Activated naive CD4-positive, alpha-beta T cell treated with anti-CD3 and anti-CD28 coated beads for 36 hours (primary cell): ENCODE measurements at regions of chr2 and their contacts with region 1.

Region 1: DNA sequence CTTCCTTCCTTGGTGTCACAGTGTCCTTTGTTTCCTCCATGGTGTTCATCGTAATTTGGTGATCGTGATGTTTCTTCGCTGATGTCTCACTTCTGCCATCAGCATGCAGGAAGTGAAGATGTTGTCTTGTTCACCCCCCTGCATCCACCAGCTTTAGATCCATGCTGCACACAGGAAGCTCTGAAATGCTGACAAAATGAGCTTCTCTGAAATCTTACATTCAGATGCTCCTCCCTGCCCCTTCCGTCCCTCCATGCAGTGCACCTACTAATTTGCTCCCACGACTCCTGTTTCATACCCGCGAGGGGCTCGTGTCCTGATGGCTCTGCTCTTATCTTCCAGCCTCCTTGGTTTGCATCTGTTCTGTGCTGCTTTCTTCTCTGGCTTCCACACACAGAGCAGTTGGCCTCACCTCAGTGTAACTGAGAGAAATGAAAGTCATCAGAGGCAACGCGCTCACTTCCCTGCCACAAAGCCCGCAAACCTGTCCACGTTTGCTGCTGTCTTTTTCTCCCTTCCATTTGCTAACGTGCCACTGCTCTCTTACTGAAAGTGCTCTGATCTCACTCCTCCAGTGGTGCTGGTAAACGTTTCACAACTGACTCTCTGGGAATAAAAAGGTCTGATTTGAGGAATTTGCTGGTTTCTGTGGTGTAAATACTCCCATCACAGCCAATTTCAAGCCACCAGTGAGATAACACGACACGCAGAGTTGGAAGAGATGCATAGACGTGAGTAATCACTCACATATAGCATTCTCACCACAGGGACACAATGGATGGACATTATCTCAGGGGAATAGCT is 41.0 kb upstream of the MGAT4A start:
- DNase-seq: peak; percentile 80
- H3K4me3 Mint-ChIP-seq: peak overlapping the region; percentile 92
- H3K27ac Mint-ChIP-seq: peak overlapping the region; percentile 93
- H3K4me1 Mint-ChIP-seq: peaks cover 69% of the 10 kb centered on the region
- H3K27me3 Mint-ChIP-seq: no peaks in the 10 kb centered on the region

Region 2: GRCh38 chr2:98295721-98296414 is 476.1 kb before region 1 on chr2:
- CTCF ChIA-PET with region 1: no interaction called
- intact Hi-C with region 1: no loop called
- DNase-seq: no peak
- H3K4me3 Mint-ChIP-seq: no peak overlapping the region
- H3K27ac Mint-ChIP-seq: no peak overlapping the region
- H3K4me1 Mint-ChIP-seq: no peaks in the 10 kb centered on the region
- H3K27me3 Mint-ChIP-seq: peaks cover 17% of the 10 kb centered on the region

Region 3: DNA sequence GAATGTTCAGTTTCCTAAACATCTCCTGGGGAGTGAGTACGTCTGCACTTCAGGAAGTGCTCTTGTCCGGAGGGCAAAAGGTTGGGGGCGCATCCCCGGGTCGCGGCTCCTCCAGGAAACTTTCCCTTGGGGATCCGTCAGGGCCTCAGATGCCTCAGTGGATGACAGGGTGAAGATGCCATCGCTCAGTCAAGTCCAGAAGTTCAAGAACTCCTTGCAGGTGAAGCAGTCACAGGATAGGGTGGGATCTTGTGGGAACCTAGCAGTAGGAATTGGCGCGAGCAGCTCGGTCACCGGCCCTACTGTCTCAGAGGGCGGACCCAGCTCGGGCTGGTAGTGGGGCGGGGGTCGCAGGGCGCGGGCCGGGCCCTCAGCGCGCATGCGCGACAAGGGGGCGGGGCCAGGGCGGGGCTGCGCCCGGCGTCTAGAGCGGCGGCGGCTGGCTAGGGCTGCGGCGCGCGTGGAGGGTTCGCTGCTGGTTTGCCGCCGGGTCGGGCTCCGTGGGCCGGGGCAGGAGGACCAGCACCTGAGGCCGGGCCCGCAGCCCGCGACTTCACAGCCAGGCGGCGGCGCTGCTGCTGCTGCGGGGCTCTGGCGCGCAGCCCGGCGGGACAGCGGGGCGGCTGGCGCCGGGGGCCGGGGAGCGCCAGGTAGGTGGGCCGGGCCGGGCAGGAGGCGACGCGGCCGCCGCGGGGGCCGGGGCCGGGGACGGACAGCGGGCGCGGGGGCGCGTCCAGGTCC is 327.3 kb before region 1 on chr2 and contains the start of gene INPP4A:
- CTCF ChIA-PET with region 1: no interaction called
- intact Hi-C with region 1: loop called (anchors 5 kb)
- DNase-seq: peak; percentile 69
- H3K4me3 Mint-ChIP-seq: peak within 1 kb of the TSS; percentile 87
- H3K27ac Mint-ChIP-seq: peak within 1 kb of the TSS; percentile 88
- H3K4me1 Mint-ChIP-seq: peaks cover 38% of the 10 kb centered on the region
- H3K27me3 Mint-ChIP-seq: no peaks in the 10 kb centered on the region
- total RNA-seq, gene INPP4A: 33.1 to 34.8 TPM

Region 4: GRCh38 chr2:98649135-98649991 is 122.6 kb before region 1 on chr2:
- CTCF ChIA-PET with region 1: interaction called, 12 read pairs
- intact Hi-C with region 1: loop called (anchors 2 kb)
- DNase-seq: peak; percentile 92
- H3K4me3 Mint-ChIP-seq: no peak overlapping the region
- H3K27ac Mint-ChIP-seq: peak overlapping the region; percentile 83
- H3K4me1 Mint-ChIP-seq: peaks cover 56% of the 10 kb centered on the region
- H3K27me3 Mint-ChIP-seq: no peaks in the 10 kb centered on the region

Region 5: GRCh38 chr2:98692090-98693054 is 79.6 kb before region 1 on chr2:
- CTCF ChIA-PET with region 1: interaction called, 3 read pairs
- intact Hi-C with region 1: loop called (anchors 2 kb)
- DNase-seq: peak; percentile 39
- H3K4me3 Mint-ChIP-seq: peak overlapping the region; percentile 67
- H3K27ac Mint-ChIP-seq: peak overlapping the region; percentile 97
- H3K4me1 Mint-ChIP-seq: peaks cover 83% of the 10 kb centered on the region
- H3K27me3 Mint-ChIP-seq: no peaks in the 10 kb centered on the region

Region 6: DNA sequence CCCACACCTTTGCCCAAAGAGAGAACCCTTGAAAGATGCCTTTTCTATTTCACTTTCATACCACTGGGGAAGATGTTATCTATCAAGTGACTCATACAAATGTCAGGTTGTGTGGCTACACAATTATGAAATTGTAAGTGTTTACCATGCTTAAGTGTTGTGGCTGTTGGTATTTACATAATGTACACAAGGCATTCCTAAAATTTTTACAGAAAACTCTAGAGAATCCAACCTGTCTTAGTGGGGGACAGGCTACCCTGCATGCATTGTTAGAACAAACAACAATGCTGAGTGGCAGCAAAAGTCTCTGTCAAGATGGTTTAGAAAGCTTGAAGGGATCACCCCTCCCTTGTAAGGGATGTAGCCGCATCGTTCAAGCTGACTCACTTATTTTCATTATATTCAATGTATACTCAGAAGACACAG is 35.4 kb before region 1 on chr2:
- CTCF ChIA-PET with region 1: interaction called, 4 read pairs
- intact Hi-C with region 1: loop called (anchors 1 kb)
- DNase-seq: peak; percentile 65
- H3K4me3 Mint-ChIP-seq: peak overlapping the region; percentile 25
- H3K27ac Mint-ChIP-seq: peak overlapping the region; percentile 41
- H3K4me1 Mint-ChIP-seq: peaks cover 75% of the 10 kb centered on the region
- H3K27me3 Mint-ChIP-seq: no peaks in the 10 kb centered on the region

Region 7: GRCh38 chr2:98822301-98823164 is 50.6 kb after region 1 on chr2:
- CTCF ChIA-PET with region 1: no interaction called
- intact Hi-C with region 1: loop called (anchors 1 kb)
- DNase-seq: peak; percentile 64
- H3K4me3 Mint-ChIP-seq: peak overlapping the region; percentile 63
- H3K27ac Mint-ChIP-seq: no peak overlapping the region
- H3K4me1 Mint-ChIP-seq: peaks cover 15% of the 10 kb centered on the region
- H3K27me3 Mint-ChIP-seq: peaks cover 2% of the 10 kb centered on the region

Region 8: GRCh38 chr2:98867539-98868309 is 95.8 kb after region 1 on chr2:
- CTCF ChIA-PET with region 1: no interaction called
- intact Hi-C with region 1: no loop called
- DNase-seq: no peak
- H3K4me3 Mint-ChIP-seq: no peak overlapping the region
- H3K27ac Mint-ChIP-seq: no peak overlapping the region
- H3K4me1 Mint-ChIP-seq: peaks cover 11% of the 10 kb centered on the region
- H3K27me3 Mint-ChIP-seq: no peaks in the 10 kb centered on the region

Region 9: GRCh38 chr2:98959810-98960507 is 188.0 kb after region 1 on chr2:
- CTCF ChIA-PET with region 1: no interaction called
- intact Hi-C with region 1: no loop called
- DNase-seq: no peak
- H3K4me3 Mint-ChIP-seq: no peak overlapping the region
- H3K27ac Mint-ChIP-seq: no peak overlapping the region
- H3K4me1 Mint-ChIP-seq: no peaks in the 10 kb centered on the region
- H3K27me3 Mint-ChIP-seq: no peaks in the 10 kb centered on the region

Region 10: DNA sequence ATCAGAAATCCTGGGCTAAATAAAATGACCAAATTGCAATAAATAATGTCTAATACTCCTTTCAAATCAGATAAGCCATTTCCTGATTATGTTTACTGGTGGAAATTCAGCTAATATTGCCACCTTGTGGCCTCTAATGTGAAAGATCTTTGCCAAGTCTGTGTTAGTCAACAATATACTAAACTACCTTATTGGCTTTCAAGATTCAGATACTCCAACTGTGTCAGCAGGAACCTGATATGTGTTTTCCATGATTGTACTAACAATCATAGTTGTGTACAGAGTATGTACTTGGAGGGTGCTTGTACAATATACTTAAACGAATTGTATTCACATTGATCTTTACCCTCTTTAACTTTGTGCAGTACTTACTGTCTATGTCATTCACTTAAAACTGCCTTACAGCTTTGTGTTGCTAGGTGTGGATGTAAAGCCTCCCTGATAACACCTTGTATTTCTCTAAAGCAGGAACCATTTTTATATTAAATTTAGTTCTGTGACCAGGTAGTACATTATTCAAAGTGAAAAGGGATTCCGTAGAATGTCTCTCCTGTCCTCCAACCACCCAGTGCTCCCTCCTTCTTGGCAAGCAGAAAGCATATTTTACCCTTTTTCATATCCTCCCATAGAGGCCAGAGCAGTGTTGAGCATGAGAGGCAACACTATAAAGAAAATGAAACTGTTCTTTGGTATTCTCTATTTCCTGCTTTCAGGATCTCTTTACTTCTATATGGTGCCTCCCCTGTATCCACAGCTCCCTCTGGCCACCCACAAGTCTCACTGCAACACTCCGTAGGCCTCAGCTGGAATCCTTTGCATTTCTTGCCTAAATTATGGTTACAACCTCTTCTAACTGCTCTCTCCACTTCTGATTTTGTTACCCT is 294.4 kb after region 1 on chr2:
- CTCF ChIA-PET with region 1: no interaction called
- intact Hi-C with region 1: loop called (anchors 5 kb)
- DNase-seq: peak; percentile 65
- H3K4me3 Mint-ChIP-seq: no peak overlapping the region
- H3K27ac Mint-ChIP-seq: no peak overlapping the region
- H3K4me1 Mint-ChIP-seq: peaks cover 4% of the 10 kb centered on the region
- H3K27me3 Mint-ChIP-seq: no peaks in the 10 kb centered on the region